Aorta (tissue), 5 donors: ENCODE measurements at regions of chr21 and their contacts with region 1.

Region 1: DNA sequence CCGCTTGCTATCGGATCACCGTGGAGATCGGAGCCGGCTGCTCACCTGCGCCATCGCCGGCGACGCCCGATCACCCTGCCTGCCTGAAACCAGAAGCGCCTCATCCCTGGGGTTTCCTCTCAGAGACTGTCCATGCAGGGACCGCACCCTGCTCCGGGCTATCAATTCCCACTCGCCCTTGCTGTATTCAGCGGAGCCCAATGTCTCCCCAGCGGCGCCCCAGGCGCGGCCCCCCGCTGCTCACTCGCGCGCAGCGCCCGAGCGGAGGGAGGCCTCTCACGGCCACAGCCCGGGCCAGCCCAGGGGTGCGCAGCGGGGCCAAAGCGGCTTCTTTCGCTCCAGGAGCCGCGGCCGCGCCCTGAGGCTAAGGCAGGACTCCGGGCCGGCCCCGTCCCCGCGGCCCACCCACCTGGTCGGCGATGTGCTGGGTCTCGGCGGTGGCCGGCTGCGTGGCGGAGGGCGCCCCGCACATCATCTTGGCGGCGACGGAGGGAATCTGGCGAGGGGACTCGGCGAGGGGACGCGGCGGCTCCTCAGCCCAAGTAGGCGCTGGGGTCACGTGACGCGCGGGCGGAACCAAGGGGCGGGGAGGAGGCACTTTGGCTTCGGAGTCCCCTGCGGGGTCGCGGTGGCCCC is at the start of gene CSTB:
- DNase-seq: peak; percentile 93 to 96
- ATAC-seq: peak; percentile 83
- H3K4me3 ChIP-seq: peak within 1 kb of the TSS; percentile 52 to 67
- H3K27ac ChIP-seq: peak within 1 kb of the TSS in 1 of 2 donors; percentile 3
- H3K4me1 ChIP-seq: no peaks in the 10 kb centered on the region
- H3K27me3 ChIP-seq: no peaks in the 10 kb centered on the region
- total RNA-seq, gene CSTB: 30.3 to 44.3 TPM

Region 2: GRCh38 chr21:43687566-43688286 is 88.2 kb before region 1 on chr21:
- intact Hi-C with region 1: loop called in 1 of 2 experiments (anchors 10 kb)
- DNase-seq: no peak
- ATAC-seq: no peak
- H3K4me3 ChIP-seq: no peak overlapping the region
- H3K27ac ChIP-seq: no peak overlapping the region
- H3K4me1 ChIP-seq: no peaks in the 10 kb centered on the region
- H3K27me3 ChIP-seq: no peaks in the 10 kb centered on the region

Region 3: DNA sequence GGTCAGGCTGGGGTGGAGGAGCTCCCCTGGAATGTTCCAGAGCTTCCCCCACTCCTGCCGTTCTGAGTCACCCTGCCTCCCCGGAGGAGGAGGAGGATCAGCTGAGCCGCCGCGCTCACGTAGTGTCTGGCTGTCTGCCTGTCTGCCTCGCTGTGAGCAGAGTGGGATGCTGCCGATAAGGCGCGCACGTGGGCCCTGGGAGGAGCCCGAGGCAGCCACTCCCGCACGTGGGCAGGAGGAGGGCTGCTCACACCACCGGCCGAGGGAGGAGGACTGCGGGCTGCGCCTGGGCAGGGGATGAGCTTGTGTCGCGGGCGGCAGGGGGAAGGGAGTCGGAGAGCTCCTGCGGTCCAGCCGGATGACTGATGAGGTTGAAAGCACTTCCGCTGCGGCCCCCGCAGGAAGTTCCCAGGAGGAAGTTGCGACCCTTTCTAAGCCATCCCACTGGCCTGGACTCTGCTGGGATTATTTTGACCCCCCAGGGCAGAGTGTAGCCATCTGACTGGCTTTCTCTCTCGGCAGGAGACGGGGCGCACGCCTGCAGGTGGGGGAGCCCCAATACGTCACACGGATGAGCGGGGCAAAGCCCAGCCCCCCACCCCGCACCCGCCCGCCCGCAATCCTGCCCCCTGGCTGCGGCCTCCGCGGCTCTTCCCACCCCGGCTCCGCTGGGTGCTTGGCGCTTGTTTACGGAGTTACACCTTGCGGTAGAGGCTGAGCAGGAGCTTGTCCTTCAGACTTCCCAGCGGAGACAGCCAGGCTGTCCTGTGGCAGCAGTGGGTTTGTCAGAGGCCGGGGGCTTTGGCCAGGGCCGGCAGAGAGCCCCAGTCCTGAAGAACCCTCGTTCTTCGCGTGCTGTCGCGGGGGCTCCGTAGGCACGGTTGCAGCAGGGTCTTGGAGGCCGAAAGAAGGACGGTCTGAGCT is 47.2 kb before region 1 on chr21:
- intact Hi-C with region 1: loop called in 1 of 2 experiments (anchors 10 kb)
- DNase-seq: peak; percentile 98
- ATAC-seq: peak; percentile 93
- H3K4me3 ChIP-seq: peak overlapping the region; percentile 29 to 37
- H3K27ac ChIP-seq: peak overlapping the region in 1 of 2 donors; percentile 98
- H3K4me1 ChIP-seq: no peaks in the 10 kb centered on the region
- H3K27me3 ChIP-seq: no peaks in the 10 kb centered on the region

Region 4: GRCh38 chr21:44285509-44285992 is 509.6 kb after region 1 on chr21 and contains the start of gene AIRE:
- intact Hi-C with region 1: no loop called
- DNase-seq: peak in 1 of 2 donors; percentile 61
- ATAC-seq: no peak
- H3K4me3 ChIP-seq: no peak within 1 kb of the TSS
- H3K27ac ChIP-seq: no peak within 1 kb of the TSS
- H3K4me1 ChIP-seq: no peaks in the 10 kb centered on the region
- H3K27me3 ChIP-seq: no peaks in the 10 kb centered on the region
- total RNA-seq, gene AIRE: 0.19 TPM in 1 of 2 donors, not detected in the other